ENCODE measurements at regions of chr2 and their contacts with region 1.

Region 1: DNA sequence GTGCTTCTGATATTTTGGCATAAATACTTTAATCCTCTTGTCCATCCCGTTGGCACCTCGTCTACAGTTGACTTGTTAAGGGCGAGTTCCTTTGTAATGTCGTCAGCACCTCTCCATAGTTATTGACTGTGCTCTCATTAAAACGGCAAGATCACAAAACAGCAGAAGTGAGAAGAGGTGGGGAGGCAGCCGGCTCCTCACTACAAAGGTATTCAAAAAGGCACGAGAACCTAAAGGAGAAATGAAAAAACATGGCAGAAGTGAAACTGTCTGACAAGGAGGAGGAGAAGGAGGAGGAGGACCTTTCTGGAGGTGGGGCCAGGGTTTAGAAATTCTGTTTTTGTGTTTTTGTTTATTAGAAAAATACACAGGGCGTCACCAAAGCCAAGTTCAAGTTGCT is 235.6 kb downstream of the BCL11A start:
- DNase-seq: peak; percentile 87
- ATAC-seq: peak; percentile 83
- H3K4me3 ChIP-seq: peak overlapping the region in 1 of 5 experiments; percentile 28
- H3K4me3 Mint-ChIP-seq: peak overlapping the region; percentile 46
- H3K27ac ChIP-seq: peak overlapping the region; percentile 56 to 75
- H3K27ac Mint-ChIP-seq: peak overlapping the region; percentile 73
- H3K4me1 ChIP-seq: peaks cover 73 to 74% of the 10 kb centered on the region in 2 donors
- H3K4me1 Mint-ChIP-seq: peaks cover 86% of the 10 kb centered on the region
- H3K27me3 ChIP-seq: no peaks in the 10 kb centered on the region
- H3K27me3 Mint-ChIP-seq: no peaks in the 10 kb centered on the region
- CTCF ChIP-seq: no peak

Region 2: DNA sequence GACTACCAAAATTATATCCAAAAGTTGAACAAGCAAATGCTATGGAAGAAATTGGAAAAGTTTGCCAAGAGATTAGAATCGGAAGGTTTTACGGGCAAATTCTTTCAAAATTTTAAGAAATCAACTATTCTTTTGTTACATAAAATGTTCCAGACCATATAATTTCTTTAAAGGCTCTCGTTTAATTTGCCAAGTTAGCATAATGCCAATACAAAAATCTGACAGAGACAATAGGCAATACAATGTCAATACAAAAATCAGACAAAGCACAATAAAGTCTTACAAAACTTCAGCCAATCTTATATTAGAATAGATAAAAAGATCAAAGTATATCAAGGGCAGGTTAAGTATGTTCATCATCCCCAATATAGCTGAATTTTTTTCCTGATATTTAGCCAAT is 11.4 kb after region 1 on chr2:
- CTCF ChIA-PET with region 1: interaction called, 3 read pairs
- POLR2A ChIA-PET with region 1: interaction called, 4 read pairs
- intact Hi-C with region 1: loop called (anchors 1 kb)
- DNase-seq: no peak
- ATAC-seq: no peak
- H3K4me3 ChIP-seq: no peak overlapping the region
- H3K4me3 Mint-ChIP-seq: no peak overlapping the region
- H3K27ac ChIP-seq: no peak overlapping the region
- H3K27ac Mint-ChIP-seq: no peak overlapping the region
- H3K4me1 ChIP-seq: peaks cover 1 to 16% of the 10 kb centered on the region in 2 donors
- H3K4me1 Mint-ChIP-seq: peaks cover 24% of the 10 kb centered on the region
- H3K27me3 ChIP-seq: no peaks in the 10 kb centered on the region
- H3K27me3 Mint-ChIP-seq: no peaks in the 10 kb centered on the region
- CTCF ChIP-seq: no peak

Region 3: GRCh38 chr2:60368456-60368855 is 50.6 kb after region 1 on chr2:
- CTCF ChIA-PET with region 1: no interaction called
- POLR2A ChIA-PET with region 1: no interaction called
- intact Hi-C with region 1: no loop called
- DNase-seq: no peak
- ATAC-seq: no peak
- H3K4me3 ChIP-seq: no peak overlapping the region
- H3K4me3 Mint-ChIP-seq: no peak overlapping the region
- H3K27ac ChIP-seq: peak overlapping the region in 1 of 2 donors; percentile 81
- H3K27ac Mint-ChIP-seq: peak overlapping the region; percentile 66
- H3K4me1 ChIP-seq: peaks cover 90 to 92% of the 10 kb centered on the region in 2 donors
- H3K4me1 Mint-ChIP-seq: peaks cover 96% of the 10 kb centered on the region
- H3K27me3 ChIP-seq: no peaks in the 10 kb centered on the region
- H3K27me3 Mint-ChIP-seq: no peaks in the 10 kb centered on the region
- CTCF ChIP-seq: no peak

Region 4: GRCh38 chr2:61193670-61194571 is 876.1 kb after region 1 on chr2:
- CTCF ChIA-PET with region 1: no interaction called
- POLR2A ChIA-PET with region 1: no interaction called
- intact Hi-C with region 1: no loop called
- DNase-seq: peak; percentile 27
- ATAC-seq: no peak
- H3K4me3 ChIP-seq: no peak overlapping the region
- H3K4me3 Mint-ChIP-seq: no peak overlapping the region
- H3K27ac ChIP-seq: peak overlapping the region; percentile 31 to 74
- H3K27ac Mint-ChIP-seq: peak overlapping the region; percentile 39
- H3K4me1 ChIP-seq: peaks cover 5 to 12% of the 10 kb centered on the region in 2 donors
- H3K4me1 Mint-ChIP-seq: peaks cover 13% of the 10 kb centered on the region
- H3K27me3 ChIP-seq: no peaks in the 10 kb centered on the region
- H3K27me3 Mint-ChIP-seq: no peaks in the 10 kb centered on the region
- CTCF ChIP-seq: no peak